Heart left ventricle (tissue), 16 donors: ENCODE measurements at regions of chr12 and their contacts with region 1.

Region 1: DNA sequence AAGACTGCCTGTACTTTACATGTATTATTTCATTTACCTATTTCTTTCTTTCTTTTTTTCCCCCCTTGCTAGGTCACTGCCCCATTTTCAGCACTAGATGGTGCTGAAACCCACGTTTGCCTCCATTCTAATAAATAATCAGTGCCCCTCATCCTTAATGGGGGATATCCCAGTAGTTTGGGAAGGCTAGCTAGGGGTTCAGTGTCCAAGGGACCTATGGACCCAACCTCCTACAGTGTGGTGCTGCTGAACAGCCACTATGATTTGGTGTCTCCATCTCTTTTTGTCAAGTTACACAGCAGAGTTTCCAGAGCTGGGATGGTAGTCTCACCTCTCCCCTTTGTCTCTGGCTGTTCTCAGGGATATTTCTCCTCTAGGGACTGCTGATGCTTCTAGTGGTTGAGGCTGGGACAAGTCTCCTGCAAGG is 6.5 kb upstream of the HCFC2 start:
- DNase-seq: no peak
- ATAC-seq: no peak
- H3K4me3 ChIP-seq: no peak overlapping the region
- H3K27ac ChIP-seq: no peak overlapping the region
- H3K4me1 ChIP-seq: peaks cover 0 to 20% (median 6%) of the 10 kb centered on the region in 12 donors
- H3K27me3 ChIP-seq: no peaks in the 10 kb centered on the region
- CTCF ChIP-seq: peak; percentile 26 to 61 (median 50)
- POLR2A ChIP-seq: no peak

Region 2: DNA sequence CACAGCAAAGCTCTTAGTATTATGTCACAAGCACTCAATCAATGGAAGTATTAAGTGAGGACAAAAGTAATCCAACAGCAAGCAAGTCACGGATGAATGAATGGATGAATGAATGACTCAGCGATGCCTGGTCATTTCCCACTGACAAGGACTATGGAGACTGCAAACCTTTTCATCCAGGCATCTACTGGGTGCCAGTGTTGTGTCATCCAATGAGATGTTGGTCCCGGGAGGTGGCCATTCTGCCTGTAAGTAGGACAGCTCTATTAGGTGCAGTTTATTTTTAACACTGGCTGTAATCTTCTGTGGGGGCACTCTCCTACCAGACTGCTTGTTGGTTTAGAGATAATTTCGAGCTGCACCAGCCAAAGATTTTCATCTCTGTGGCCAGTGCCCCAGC is 431.3 kb before region 1 on chr12:
- intact Hi-C with region 1: loop called in 1 of 10 experiments (anchors 5 kb)
- DNase-seq: peak in 4 of 5 donors; percentile 63 to 77 (median 68)
- ATAC-seq: peak; percentile 79 to 91 (median 83)
- H3K4me3 ChIP-seq: no peak overlapping the region
- H3K27ac ChIP-seq: peak overlapping the region in 11 of 12 donors; percentile 37 to 82 (median 68)
- H3K4me1 ChIP-seq: peaks cover 0 to 19% (median 7%) of the 10 kb centered on the region in 12 donors
- H3K27me3 ChIP-seq: no peaks in the 10 kb centered on the region
- CTCF ChIP-seq: peak in 7 of 12 donors; percentile 25 to 70 (median 38)
- POLR2A ChIP-seq: no peak

Region 3: GRCh38 chr12:103965590-103966504 is 91.9 kb before region 1 on chr12 and contains the start of gene TDG:
- intact Hi-C with region 1: loop called in 5 of 10 experiments (anchors 5 to 10 kb)
- DNase-seq: peak; percentile 98 to 99 (median 99)
- ATAC-seq: peak; percentile 98 to 99 (median 99)
- H3K4me3 ChIP-seq: peak within 1 kb of the TSS; percentile 74 to 99 (median 84)
- H3K27ac ChIP-seq: peak within 1 kb of the TSS; percentile 73 to 98 (median 96)
- H3K4me1 ChIP-seq: peaks cover 4 to 63% (median 51%) of the 10 kb centered on the region in 12 donors
- H3K27me3 ChIP-seq: no peaks in the 10 kb centered on the region
- CTCF ChIP-seq: peak in 3 of 12 donors; percentile 11 to 36 (median 29)
- POLR2A ChIP-seq: peak; percentile 4 to 92
- total RNA-seq, gene TDG: 7.8 to 15.5 (median 13.1) TPM

Region 4: DNA sequence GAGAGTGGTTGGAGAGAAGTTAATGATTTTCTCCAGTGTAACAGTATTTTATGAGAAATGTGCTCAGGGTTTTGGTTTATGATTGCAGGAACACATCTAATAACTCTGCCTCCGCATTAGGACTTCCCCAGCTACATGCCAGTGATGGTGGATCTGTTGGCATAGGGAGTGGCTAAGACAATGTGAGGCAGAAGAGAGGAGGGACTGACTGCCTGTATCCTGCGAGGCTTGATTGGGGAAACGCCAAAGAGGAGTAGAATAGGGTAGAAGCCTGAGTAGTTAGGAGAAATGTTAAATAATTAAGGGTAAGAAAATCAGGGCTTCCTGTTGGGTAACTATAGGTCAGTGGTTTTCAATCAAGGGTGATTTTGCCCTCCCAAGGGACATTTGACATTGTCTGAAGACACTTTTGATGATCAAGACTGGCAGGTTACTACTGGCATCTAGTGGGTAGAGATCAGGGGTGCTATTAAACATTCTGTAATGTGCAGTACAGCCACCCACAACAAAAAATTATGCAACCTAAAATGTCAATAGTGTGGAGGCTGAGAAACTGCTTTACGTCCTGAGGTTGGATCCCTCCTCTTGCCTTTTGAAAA is 79.3 kb before region 1 on chr12:
- intact Hi-C with region 1: loop called in 3 of 10 experiments (anchors 5 to 10 kb)
- DNase-seq: no peak
- ATAC-seq: no peak
- H3K4me3 ChIP-seq: no peak overlapping the region
- H3K27ac ChIP-seq: no peak overlapping the region
- H3K4me1 ChIP-seq: peaks cover 0 to 10% (median 5%) of the 10 kb centered on the region in 12 donors
- H3K27me3 ChIP-seq: no peaks in the 10 kb centered on the region
- CTCF ChIP-seq: no peak
- POLR2A ChIP-seq: no peak

Region 5: GRCh38 chr12:103997286-103997900 is 60.4 kb before region 1 on chr12:
- intact Hi-C with region 1: loop called in 4 of 10 experiments (anchors 2 to 10 kb)
- DNase-seq: peak; percentile 26 to 77 (median 73)
- ATAC-seq: peak; percentile 81 to 89 (median 85)
- H3K4me3 ChIP-seq: peak overlapping the region in 3 of 12 donors; percentile 15 to 31 (median 16)
- H3K27ac ChIP-seq: peak overlapping the region in 11 of 12 donors; percentile 25 to 77 (median 59)
- H3K4me1 ChIP-seq: peaks cover 0 to 14% (median 0%) of the 10 kb centered on the region in 12 donors
- H3K27me3 ChIP-seq: no peaks in the 10 kb centered on the region
- CTCF ChIP-seq: no peak
- POLR2A ChIP-seq: no peak